AG04449 (cell line): ENCODE measurements at regions of chr7 and their contacts with region 1.

Region 1: GRCh38 chr7:105141068-105141467 is 127.1 kb downstream of the KMT2E start:
- DNase-seq: peak; percentile 16
- H3K4me3 ChIP-seq: no peak overlapping the region
- CTCF ChIP-seq: peak; percentile 58

Region 2: GRCh38 chr7:105000927-105001336 is 140.1 kb before region 1 on chr7:
- CTCF ChIA-PET with region 1: no interaction called
- POLR2A ChIA-PET with region 1: no interaction called
- DNase-seq: no peak
- H3K4me3 ChIP-seq: no peak overlapping the region
- CTCF ChIP-seq: no peak

Region 3: DNA sequence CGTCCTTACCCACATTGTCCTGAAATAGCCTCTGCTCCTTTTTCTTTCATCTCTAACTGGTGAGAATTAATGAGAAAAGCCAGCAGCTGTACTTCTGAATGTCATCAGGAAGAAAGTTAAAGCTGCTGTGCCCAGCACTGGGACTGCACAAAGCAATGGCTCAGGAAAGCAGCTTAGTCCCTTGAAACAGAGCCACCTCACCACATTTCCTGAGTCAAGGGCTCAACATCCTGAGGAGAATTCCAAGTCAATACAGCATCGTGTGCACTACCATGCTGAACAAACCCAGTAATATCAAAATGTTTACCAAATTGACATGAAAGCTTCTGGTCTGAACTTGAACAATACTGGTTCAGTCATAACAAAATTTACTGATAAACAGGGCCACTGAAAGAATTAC is 13.0 kb after region 1 on chr7:
- CTCF ChIA-PET with region 1: interaction called, 26 read pairs
- POLR2A ChIA-PET with region 1: no interaction called
- DNase-seq: no peak
- H3K4me3 ChIP-seq: no peak overlapping the region
- CTCF ChIP-seq: no peak

Region 4: GRCh38 chr7:105336009-105336408 is 194.9 kb after region 1 on chr7:
- CTCF ChIA-PET with region 1: interaction called, 11 read pairs
- POLR2A ChIA-PET with region 1: no interaction called
- DNase-seq: no peak
- H3K4me3 ChIP-seq: no peak overlapping the region
- CTCF ChIP-seq: peak; percentile 4

Region 5: DNA sequence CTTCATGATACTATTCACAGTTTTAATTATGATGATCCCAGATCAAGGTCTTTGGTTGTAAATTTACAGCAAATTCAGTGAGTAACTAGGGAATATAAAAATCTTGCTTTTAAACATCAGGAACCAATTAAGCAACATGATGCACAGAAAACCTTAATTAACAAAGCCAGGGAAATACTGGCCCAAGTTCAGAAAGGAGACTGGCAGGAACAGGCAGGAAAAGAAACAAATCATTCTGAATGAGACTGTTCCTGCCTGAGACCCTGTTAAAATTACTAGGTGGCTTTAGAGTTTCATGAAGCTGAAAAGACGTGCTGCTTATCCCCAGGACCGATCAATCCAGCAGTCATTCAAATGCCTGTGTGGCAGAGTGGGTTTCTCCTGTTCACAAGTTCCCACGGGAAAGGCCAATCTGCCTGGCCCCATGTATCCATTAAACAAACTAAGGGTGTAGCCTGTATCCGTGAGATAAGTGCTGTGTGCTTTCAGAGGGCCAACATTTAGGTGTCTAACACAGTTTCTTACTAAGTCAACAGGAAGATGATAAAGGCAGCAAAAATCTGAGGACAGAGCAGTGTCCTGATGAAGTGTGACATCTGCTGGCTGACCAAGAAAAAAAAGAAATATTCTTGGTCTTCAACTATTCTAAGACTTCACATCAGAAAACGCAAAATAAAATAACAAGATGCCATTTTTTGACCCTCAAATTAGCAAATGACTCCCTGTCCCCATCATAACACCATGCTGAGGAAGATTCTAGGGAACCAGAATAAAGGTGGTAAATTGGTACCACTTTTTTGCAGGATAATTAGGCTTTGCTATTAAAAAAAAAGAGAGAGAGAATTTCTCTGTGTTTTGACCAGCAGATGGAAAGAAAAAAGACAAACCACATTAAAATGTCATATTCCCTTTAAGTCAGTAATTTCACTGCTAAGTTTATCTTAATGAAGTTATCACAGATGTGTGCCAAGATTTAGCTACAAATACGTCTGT is 346.8 kb after region 1 on chr7:
- CTCF ChIA-PET with region 1: interaction called, 13 read pairs
- POLR2A ChIA-PET with region 1: no interaction called
- DNase-seq: peak; percentile 65
- H3K4me3 ChIP-seq: no peak overlapping the region; the same call in 1 of the 2 replicates
- CTCF ChIP-seq: no peak